CD8-positive, alpha-beta T cell (primary cell): ENCODE measurements at regions of chr6 and their contacts with region 1.

Region 1: DNA sequence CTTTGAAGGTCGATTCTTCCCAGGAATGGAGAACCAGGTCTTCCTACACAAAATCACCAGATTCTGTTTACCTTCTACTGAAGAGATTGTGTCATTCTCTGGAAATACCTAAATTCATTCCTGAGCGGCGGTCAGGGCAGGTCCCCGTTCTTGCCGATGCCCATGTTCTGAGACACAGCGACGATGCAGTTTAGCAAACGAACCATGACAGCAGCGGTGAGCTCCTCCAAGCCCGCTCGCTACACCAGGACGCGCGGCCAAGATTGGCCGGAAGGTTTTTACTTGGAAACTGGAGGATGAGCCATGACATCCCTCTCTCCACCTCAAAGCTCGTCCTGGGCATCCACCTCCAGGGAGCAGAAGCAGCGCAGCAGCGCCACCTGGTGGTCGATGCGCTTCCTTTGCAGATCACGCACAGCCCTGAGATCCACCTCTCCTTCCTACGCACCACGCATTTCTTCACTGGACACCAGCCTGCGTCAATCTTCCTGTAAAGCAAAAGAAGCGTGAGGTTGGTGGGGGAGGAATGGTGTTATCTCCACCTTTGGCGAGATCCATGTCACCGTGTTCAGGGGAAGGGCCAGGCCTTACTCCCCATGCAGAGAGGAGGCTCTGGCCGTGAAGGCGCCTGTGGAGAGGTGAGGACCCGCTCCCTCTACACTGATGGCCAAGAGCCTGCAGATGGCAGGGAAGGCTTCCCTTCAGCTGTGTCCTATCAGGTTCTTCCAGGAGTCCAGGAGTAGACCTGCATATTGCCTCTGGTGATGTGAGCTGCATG is 9.9 kb upstream of the HLA-B start:
- DNase-seq: peak; percentile 80 to 94 (median 90)
- ATAC-seq: peak; percentile 98
- H3K4me3 ChIP-seq: peak overlapping the region; percentile 54 to 57
- H3K4me3 Mint-ChIP-seq: peak overlapping the region; percentile 86
- H3K27ac ChIP-seq: peak overlapping the region in 1 of 2 experiments; percentile 31
- H3K27ac Mint-ChIP-seq: peak overlapping the region; percentile 82
- H3K4me1 ChIP-seq: peaks cover 3% of the 10 kb centered on the region
- H3K4me1 Mint-ChIP-seq: peaks cover 15% of the 10 kb centered on the region
- H3K27me3 ChIP-seq: no peaks in the 10 kb centered on the region
- H3K27me3 Mint-ChIP-seq: peaks cover 11% of the 10 kb centered on the region
- CTCF ChIP-seq: peak; percentile 94

Region 2: DNA sequence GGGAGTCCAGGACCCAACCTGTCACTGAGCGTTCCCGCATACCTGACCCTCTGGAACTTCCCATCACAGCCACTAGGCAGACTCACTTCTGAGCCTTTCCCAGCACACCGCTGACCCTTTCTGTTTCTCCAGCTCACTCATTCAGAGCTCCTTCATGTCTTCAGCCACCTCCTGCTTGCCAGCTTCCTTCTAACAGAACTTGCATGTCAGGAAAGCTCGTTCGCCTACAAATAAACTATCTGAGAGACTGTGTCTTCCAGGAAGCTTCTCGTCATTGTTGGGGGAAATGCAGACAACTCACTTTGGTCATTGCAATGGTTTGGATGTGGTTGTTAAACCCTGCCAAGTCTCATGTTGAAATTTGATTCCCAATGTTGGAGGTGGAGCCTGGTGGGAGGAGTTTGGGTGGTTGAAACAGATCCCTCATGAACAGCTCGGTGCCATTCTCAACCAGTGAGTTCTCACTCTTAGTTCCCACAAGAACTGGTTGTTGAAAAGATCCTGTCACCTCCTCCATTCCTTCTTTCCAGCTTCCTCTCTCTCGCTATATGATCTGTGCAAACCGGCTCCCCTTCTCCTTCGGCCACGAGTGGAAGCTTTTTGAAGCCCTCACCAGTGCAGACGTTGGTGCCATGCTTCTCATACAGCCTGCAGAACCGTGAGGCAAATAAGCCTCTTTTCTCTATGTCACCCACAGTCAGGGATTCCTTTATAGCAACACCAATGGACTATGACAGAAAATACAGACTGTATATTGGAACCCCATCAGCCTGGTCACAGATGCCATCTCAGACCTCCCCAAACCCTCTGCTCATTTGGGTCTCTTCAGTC is 384.7 kb before region 1 on chr6:
- CTCF ChIA-PET with region 1: no interaction called
- POLR2A ChIA-PET with region 1: no interaction called
- intact Hi-C with region 1: no loop called
- DNase-seq: no peak
- ATAC-seq: no peak
- H3K4me3 ChIP-seq: no peak overlapping the region
- H3K4me3 Mint-ChIP-seq: no peak overlapping the region
- H3K27ac ChIP-seq: no peak overlapping the region
- H3K27ac Mint-ChIP-seq: no peak overlapping the region
- H3K4me1 ChIP-seq: no peaks in the 10 kb centered on the region
- H3K4me1 Mint-ChIP-seq: peaks cover 2% of the 10 kb centered on the region
- H3K27me3 ChIP-seq: peaks cover 0 to 4% of the 10 kb centered on the region in 2 experiments
- H3K27me3 Mint-ChIP-seq: peaks cover 35% of the 10 kb centered on the region
- CTCF ChIP-seq: no peak

Region 3: GRCh38 chr6:31139599-31139998 is 227.3 kb before region 1 on chr6:
- CTCF ChIA-PET with region 1: interaction called, 57 read pairs
- POLR2A ChIA-PET with region 1: interaction called, 4 read pairs
- intact Hi-C with region 1: loop called (anchors 1 kb)
- DNase-seq: no peak
- ATAC-seq: no peak
- H3K4me3 ChIP-seq: no peak overlapping the region
- H3K4me3 Mint-ChIP-seq: no peak overlapping the region
- H3K27ac ChIP-seq: no peak overlapping the region
- H3K27ac Mint-ChIP-seq: no peak overlapping the region
- H3K4me1 ChIP-seq: peaks cover 5% of the 10 kb centered on the region
- H3K4me1 Mint-ChIP-seq: peaks cover 4% of the 10 kb centered on the region
- H3K27me3 ChIP-seq: no peaks in the 10 kb centered on the region
- H3K27me3 Mint-ChIP-seq: no peaks in the 10 kb centered on the region
- CTCF ChIP-seq: no peak

Region 4: GRCh38 chr6:31252625-31253024 is 114.3 kb before region 1 on chr6:
- CTCF ChIA-PET with region 1: interaction called, 19 read pairs
- POLR2A ChIA-PET with region 1: interaction called, 4 read pairs
- intact Hi-C with region 1: loop called in 1 of 2 experiments (anchors 5 kb)
- DNase-seq: peak in 2 of 9 experiments; percentile 8 to 35
- ATAC-seq: no peak
- H3K4me3 ChIP-seq: no peak overlapping the region
- H3K4me3 Mint-ChIP-seq: no peak overlapping the region
- H3K27ac ChIP-seq: no peak overlapping the region
- H3K27ac Mint-ChIP-seq: no peak overlapping the region
- H3K4me1 ChIP-seq: no peaks in the 10 kb centered on the region
- H3K4me1 Mint-ChIP-seq: peaks cover 9% of the 10 kb centered on the region
- H3K27me3 ChIP-seq: no peaks in the 10 kb centered on the region
- H3K27me3 Mint-ChIP-seq: no peaks in the 10 kb centered on the region
- CTCF ChIP-seq: no peak

Region 5: GRCh38 chr6:31285486-31285885 is 81.4 kb before region 1 on chr6:
- CTCF ChIA-PET with region 1: interaction called, 13 read pairs
- POLR2A ChIA-PET with region 1: no interaction called
- intact Hi-C with region 1: no loop called
- DNase-seq: no peak
- ATAC-seq: no peak
- H3K4me3 ChIP-seq: no peak overlapping the region
- H3K4me3 Mint-ChIP-seq: no peak overlapping the region
- H3K27ac ChIP-seq: no peak overlapping the region
- H3K27ac Mint-ChIP-seq: no peak overlapping the region
- H3K4me1 ChIP-seq: no peaks in the 10 kb centered on the region
- H3K4me1 Mint-ChIP-seq: no peaks in the 10 kb centered on the region
- H3K27me3 ChIP-seq: no peaks in the 10 kb centered on the region
- H3K27me3 Mint-ChIP-seq: no peaks in the 10 kb centered on the region
- CTCF ChIP-seq: no peak

Region 6: GRCh38 chr6:31351401-31352309 is 15.2 kb before region 1 on chr6:
- CTCF ChIA-PET with region 1: interaction called, 27 read pairs
- POLR2A ChIA-PET with region 1: interaction called, 12 read pairs
- intact Hi-C with region 1: loop called in 1 of 2 experiments (anchors 2 kb)
- DNase-seq: peak in 5 of 9 experiments; percentile 33 to 84 (median 50)
- ATAC-seq: peak; percentile 44
- H3K4me3 ChIP-seq: no peak overlapping the region
- H3K4me3 Mint-ChIP-seq: peak overlapping the region; percentile 100
- H3K27ac ChIP-seq: peak overlapping the region; percentile 41 to 42
- H3K27ac Mint-ChIP-seq: peak overlapping the region; percentile 81
- H3K4me1 ChIP-seq: peaks cover 40% of the 10 kb centered on the region
- H3K4me1 Mint-ChIP-seq: peaks cover 56% of the 10 kb centered on the region
- H3K27me3 ChIP-seq: no peaks in the 10 kb centered on the region
- H3K27me3 Mint-ChIP-seq: no peaks in the 10 kb centered on the region
- CTCF ChIP-seq: no peak

Region 7: GRCh38 chr6:31441365-31442267 is 74.7 kb after region 1 on chr6:
- CTCF ChIA-PET with region 1: interaction called, 8 read pairs
- POLR2A ChIA-PET with region 1: no interaction called
- intact Hi-C with region 1: loop called in 1 of 2 experiments (anchors 1 kb)
- DNase-seq: peak in 8 of 9 experiments; percentile 80 to 93 (median 84)
- ATAC-seq: peak; percentile 98
- H3K4me3 ChIP-seq: no peak overlapping the region
- H3K4me3 Mint-ChIP-seq: no peak overlapping the region
- H3K27ac ChIP-seq: no peak overlapping the region
- H3K27ac Mint-ChIP-seq: no peak overlapping the region
- H3K4me1 ChIP-seq: peaks cover 7% of the 10 kb centered on the region
- H3K4me1 Mint-ChIP-seq: peaks cover 5% of the 10 kb centered on the region
- H3K27me3 ChIP-seq: peaks cover 0 to 3% of the 10 kb centered on the region in 2 experiments
- H3K27me3 Mint-ChIP-seq: peaks cover 37% of the 10 kb centered on the region
- CTCF ChIP-seq: peak; percentile 75